ENCODE measurements at regions of chr17 and their contacts with region 1.

Region 1: GRCh38 chr17:61635913-61636432 is 45.0 kb upstream of the NACA2 start:
- DNase-seq: peak; percentile 66
- ATAC-seq: peak; percentile 63; the same call in 1 of the 2 replicates
- H3K4me3 ChIP-seq: no peak overlapping the region
- H3K27ac ChIP-seq: no peak overlapping the region
- H3K4me1 ChIP-seq: no peaks in the 10 kb centered on the region
- H3K27me3 ChIP-seq: no peaks in the 10 kb centered on the region
- CTCF ChIP-seq: peak; percentile 87
- POLR2A ChIP-seq: peak; percentile 56; the same call in 1 of the 2 replicates
- RAD21 ChIP-seq: peak; percentile 97

Region 2: DNA sequence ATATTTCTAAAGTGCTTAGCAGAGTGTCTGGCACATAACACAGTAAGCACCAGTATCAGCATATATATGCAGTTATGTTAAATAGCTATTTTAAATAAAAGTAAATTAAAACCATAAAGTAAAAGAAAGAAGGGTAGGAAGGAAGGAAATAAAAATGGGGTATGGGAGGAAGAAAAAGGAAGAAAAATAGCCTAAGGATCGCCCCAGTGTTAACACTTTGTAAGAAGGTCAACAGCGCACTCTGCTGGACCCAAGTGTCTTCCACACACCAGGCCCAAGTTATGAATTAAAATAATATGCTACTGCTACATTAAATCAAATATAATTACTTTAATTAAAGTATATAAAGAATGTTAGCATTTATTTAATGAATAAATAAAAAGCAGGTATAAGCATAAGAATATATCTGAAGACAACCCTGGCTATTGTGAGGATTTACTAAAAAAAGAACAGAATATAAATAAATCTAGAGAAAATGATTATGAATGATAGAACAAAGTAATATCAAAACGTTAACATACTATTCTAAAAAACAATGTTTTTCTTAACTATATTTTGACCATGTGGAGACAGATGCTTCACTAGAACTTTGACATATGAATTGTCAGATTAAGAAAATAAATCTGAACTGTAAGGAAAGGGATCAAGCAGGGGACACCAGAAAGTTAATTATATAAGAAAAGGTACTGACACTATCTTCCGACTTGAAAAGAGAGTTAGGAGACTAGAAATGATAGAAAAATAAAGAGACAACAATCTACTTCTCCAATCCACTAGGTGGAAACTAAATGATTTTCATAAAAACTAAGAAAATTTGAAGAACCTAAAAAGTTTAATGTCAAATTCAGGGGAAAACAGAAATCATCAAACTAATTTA is 201.4 kb after region 1 on chr17:
- CTCF ChIA-PET with region 1: interaction called, 9 read pairs
- POLR2A ChIA-PET with region 1: no interaction called
- dilution Hi-C with region 1: no loop called
- in situ Hi-C with region 1: loop called (anchors 5 kb)
- intact Hi-C with region 1: loop called (anchors 1 kb)
- DNase-seq: peak; percentile 81
- ATAC-seq: peak; percentile 84
- H3K4me3 ChIP-seq: no peak overlapping the region
- H3K27ac ChIP-seq: no peak overlapping the region
- H3K4me1 ChIP-seq: peaks cover 4% of the 10 kb centered on the region
- H3K27me3 ChIP-seq: no peaks in the 10 kb centered on the region
- CTCF ChIP-seq: peak; percentile 94
- POLR2A ChIP-seq: no peak
- RAD21 ChIP-seq: peak; percentile 95

Region 3: GRCh38 chr17:61843435-61843834 is 207.5 kb after region 1 on chr17:
- CTCF ChIA-PET with region 1: interaction called, 4 read pairs
- POLR2A ChIA-PET with region 1: no interaction called
- dilution Hi-C with region 1: no loop called
- in situ Hi-C with region 1: loop called (anchors 5 kb)
- intact Hi-C with region 1: no loop called
- DNase-seq: no peak
- ATAC-seq: no peak
- H3K4me3 ChIP-seq: no peak overlapping the region
- H3K27ac ChIP-seq: no peak overlapping the region
- H3K4me1 ChIP-seq: no peaks in the 10 kb centered on the region
- H3K27me3 ChIP-seq: no peaks in the 10 kb centered on the region
- CTCF ChIP-seq: no peak
- POLR2A ChIP-seq: no peak
- RAD21 ChIP-seq: no peak

Region 4: DNA sequence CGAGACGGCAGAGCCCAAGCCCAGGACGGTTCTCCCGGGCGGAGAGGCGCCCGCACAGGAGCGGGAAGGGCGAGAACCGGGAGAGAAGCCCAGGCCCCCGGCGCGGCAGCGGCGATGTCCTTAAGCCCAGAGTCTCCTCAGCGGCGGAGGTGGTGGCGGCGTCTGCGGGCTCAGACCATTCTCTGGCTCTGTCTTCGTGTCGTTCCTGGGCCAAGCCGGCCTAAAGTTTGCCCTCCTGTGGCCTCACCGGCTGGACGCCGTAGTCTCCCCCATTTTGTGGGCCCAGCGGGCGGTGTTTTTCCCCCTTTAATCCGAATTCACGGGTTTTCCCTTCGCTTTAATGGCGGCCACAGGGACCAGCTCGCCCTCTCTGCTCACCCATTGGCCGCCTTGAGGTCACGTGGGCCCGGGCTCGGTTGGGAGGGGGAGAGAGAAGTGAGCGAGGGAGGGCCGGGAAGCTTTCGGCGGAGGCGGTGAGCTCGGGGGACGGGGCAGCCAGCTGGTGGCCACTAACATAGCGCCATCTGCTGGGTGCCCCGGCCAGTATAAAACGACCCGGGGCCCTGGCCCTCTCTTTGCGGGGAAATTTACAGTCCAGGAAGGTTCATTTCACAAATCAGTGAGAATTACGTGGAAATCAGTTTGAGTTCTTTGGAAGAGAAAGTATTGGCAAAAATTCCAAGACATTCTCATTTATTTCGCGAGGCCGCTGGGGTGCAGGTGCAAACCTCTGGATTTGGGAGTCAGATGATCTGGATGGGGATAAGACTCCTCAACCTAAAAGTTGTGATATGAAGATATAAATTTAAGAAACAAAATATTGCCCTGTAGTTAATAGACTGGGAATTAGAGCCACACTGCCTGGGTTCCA is 429.9 kb after region 1 on chr17:
- CTCF ChIA-PET with region 1: no interaction called
- POLR2A ChIA-PET with region 1: no interaction called
- dilution Hi-C with region 1: no loop called
- in situ Hi-C with region 1: loop called (anchors 25 kb)
- intact Hi-C with region 1: loop called (anchors 5 kb)
- DNase-seq: peak; percentile 96
- ATAC-seq: peak; percentile 95
- H3K4me3 ChIP-seq: peak overlapping the region; percentile 97
- H3K27ac ChIP-seq: peak overlapping the region; percentile 99
- H3K4me1 ChIP-seq: peaks cover 2% of the 10 kb centered on the region; the same call in 1 of the 2 replicates
- H3K27me3 ChIP-seq: no peaks in the 10 kb centered on the region
- CTCF ChIP-seq: peak; percentile 97
- POLR2A ChIP-seq: peak; percentile 83
- RAD21 ChIP-seq: peak; percentile 66